Thyroid gland (tissue), 4 donors: ENCODE measurements at regions of chr11 and their contacts with region 1.

Region 1: DNA sequence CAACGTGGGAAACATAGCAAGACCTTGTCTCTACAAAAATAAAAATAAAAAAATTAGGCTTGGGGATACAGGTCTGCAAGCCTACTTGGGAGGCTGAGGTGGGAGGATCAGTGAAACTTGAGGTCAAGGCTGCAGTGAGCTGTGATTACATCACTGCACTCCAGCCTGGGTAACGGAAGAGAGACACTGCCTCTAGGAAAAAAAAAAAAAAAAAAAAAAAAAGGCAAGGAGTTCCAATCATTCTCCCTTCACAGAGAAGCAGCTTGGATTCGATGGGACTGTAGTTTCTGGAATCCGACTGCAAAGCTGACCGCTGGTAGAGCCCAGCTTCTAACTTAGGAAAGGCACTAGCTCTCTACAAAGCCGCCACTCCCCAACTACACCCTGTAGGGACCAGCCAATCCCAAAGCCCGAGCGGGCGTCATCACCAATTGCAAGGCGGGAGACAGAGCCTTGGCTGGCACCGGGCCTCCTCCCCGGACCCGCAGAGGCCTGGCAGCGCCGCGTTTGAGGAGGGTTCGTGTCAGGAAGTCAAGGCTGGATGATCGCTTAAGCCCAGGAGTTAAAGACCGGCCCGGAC is 699 bp upstream of the DDB2 start:
- DNase-seq: peak; percentile 96
- H3K4me3 ChIP-seq: peak overlapping the region; percentile 8 to 81 (median 52)
- H3K27ac ChIP-seq: peak overlapping the region; percentile 84 to 97 (median 93)
- H3K4me1 ChIP-seq: peaks cover 17 to 18% of the 10 kb centered on the region in 2 donors
- H3K27me3 ChIP-seq: no peaks in the 10 kb centered on the region
- CTCF ChIP-seq: no peak
- POLR2A ChIP-seq: peak in 1 of 2 donors; percentile 69

Region 2: DNA sequence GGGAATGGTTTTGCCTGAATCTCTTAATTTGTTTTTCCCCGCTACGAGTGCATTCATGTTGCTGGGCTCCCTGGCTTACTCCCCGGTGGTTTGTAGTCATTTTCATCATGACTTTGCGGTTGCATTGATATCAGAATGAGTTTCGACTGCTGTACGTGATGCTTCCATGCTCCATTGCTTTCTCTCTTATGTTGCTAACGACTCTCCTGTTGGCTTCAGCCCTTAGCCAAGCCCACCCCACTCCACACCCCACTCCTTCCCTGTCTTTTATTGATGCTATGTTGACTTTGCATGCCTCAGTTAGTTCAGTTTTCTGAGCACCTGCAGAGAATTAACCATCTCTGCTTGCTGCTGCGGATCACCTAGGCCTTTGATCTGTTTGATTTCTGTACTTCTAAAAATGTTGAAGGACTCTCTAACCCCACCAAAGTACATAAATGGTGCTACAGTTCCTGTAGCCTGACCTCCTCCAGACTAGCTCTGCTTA is 102.7 kb before region 1 on chr11:
- intact Hi-C with region 1: no loop called
- DNase-seq: no peak
- H3K4me3 ChIP-seq: no peak overlapping the region
- H3K27ac ChIP-seq: no peak overlapping the region
- H3K4me1 ChIP-seq: peaks cover 12 to 16% of the 10 kb centered on the region in 2 donors
- H3K27me3 ChIP-seq: no peaks in the 10 kb centered on the region
- CTCF ChIP-seq: no peak
- POLR2A ChIP-seq: no peak

Region 3: GRCh38 chr11:47176328-47177228 is 37.5 kb before region 1 on chr11 and contains the start of gene ARFGAP2:
- intact Hi-C with region 1: loop called (anchors 5 kb)
- DNase-seq: peak; percentile 98
- H3K4me3 ChIP-seq: peak within 1 kb of the TSS; percentile 76 to 90 (median 77)
- H3K27ac ChIP-seq: peak within 1 kb of the TSS; percentile 96 to 98 (median 96)
- H3K4me1 ChIP-seq: peaks cover 20 to 25% of the 10 kb centered on the region in 2 donors
- H3K27me3 ChIP-seq: no peaks in the 10 kb centered on the region
- CTCF ChIP-seq: no peak
- POLR2A ChIP-seq: peak in 1 of 2 donors; percentile 53
- total RNA-seq, gene ARFGAP2: 145 to 194 (median 160) TPM